Heart left ventricle (tissue), 16 donors: ENCODE measurements at regions of chr6 and their contacts with region 1.

Region 1: GRCh38 chr6:161694995-161695394 is 421.1 kb upstream of the AGPAT4 start:
- DNase-seq: no peak
- ATAC-seq: peak in 1 of 4 donors; percentile 51
- H3K4me3 ChIP-seq: no peak overlapping the region
- H3K27ac ChIP-seq: no peak overlapping the region
- H3K4me1 ChIP-seq: no peaks in the 10 kb centered on the region
- H3K27me3 ChIP-seq: no peaks in the 10 kb centered on the region
- CTCF ChIP-seq: peak; percentile 21 to 63 (median 40)
- POLR2A ChIP-seq: no peak

Region 2: GRCh38 chr6:161395716-161396231 is 299.2 kb before region 1 on chr6:
- intact Hi-C with region 1: loop called in 1 of 10 experiments (anchors 5 kb)
- DNase-seq: no peak
- ATAC-seq: peak in 2 of 4 donors; percentile 41 to 44
- H3K4me3 ChIP-seq: no peak overlapping the region
- H3K27ac ChIP-seq: no peak overlapping the region
- H3K4me1 ChIP-seq: peaks cover 0 to 6% (median 1%) of the 10 kb centered on the region in 12 donors
- H3K27me3 ChIP-seq: no peaks in the 10 kb centered on the region
- CTCF ChIP-seq: no peak
- POLR2A ChIP-seq: no peak

Region 3: DNA sequence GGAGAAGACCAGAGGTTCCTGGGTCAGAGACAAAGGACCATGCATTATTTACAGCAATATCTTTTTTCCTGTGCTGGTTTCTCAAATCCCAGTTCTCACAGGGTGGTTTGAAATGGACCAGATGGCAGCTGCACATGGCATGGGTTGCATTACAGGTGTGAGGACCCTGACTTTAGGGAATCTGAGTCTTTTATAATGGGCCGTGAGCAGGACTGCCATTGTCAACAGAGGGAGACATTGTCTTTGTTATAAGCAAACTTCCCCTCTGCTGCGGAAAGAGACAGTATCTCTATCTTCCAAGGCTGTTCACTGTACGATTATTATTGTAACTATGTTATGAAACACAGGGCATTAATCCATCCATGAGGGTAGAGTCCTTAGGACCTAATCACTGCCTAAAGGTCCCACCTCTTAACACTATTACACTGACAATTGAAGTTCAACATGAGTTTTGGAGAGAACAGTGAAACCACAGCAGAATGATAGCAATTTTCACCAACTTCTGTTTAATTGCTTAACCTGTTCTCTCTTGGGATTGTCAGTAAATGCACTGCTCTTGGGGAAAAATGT is 265.0 kb before region 1 on chr6:
- intact Hi-C with region 1: loop called in 2 of 10 experiments (anchors 10 kb)
- DNase-seq: no peak
- ATAC-seq: peak in 1 of 4 donors; percentile 10
- H3K4me3 ChIP-seq: no peak overlapping the region
- H3K27ac ChIP-seq: no peak overlapping the region
- H3K4me1 ChIP-seq: peaks cover 0 to 15% (median 6%) of the 10 kb centered on the region in 12 donors
- H3K27me3 ChIP-seq: no peaks in the 10 kb centered on the region
- CTCF ChIP-seq: peak in 4 of 12 donors; percentile 20 to 39 (median 30)
- POLR2A ChIP-seq: no peak